Tibial artery (tissue), 4 donors: ENCODE measurements at regions of chr15 and their contacts with region 1.

Region 1: DNA sequence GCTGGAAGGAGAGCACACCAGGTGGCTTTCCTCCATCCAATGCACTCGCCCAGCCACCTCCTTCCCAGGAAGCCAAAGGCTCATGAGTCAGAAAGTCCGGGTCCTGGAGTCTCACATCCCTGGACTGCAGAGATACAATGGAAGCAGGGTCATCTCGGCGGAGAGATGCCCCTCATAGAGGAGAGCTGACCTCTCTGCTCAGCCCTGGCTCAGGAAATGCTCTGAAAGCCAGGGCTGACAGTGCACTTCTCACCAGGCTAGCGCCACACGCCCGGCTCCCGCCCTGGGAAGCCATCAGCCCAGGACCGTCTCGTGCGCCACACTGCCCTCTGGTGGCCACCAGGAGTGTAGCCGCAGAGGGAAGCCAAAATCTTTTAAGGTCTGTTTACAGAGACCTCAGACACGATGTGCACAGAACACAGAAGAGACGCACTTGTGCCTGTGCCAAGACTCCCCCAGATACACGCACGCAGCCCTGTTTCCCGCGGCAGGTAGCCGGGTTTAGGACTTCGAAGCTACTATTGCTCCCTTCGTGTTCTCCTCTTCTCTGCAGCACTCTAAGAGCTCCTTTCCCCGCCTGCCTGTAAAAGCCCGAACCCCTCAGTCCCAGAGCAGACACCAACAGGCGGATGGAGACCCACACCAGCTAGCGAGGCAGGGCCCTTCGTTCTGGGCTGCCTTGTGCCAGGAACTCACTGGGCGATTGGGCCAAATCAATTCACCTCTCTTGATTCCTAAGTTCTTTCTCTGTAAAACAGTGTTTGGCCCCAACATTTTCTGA is 9.7 kb downstream of the NTRK3 start:
- DNase-seq: peak; percentile 67 to 88
- H3K4me3 ChIP-seq: peak overlapping the region; percentile 32
- H3K27ac ChIP-seq: peak overlapping the region; percentile 78 to 93
- H3K4me1 ChIP-seq: peaks cover 0 to 93% (median 47%) of the 10 kb centered on the region in 4 donors
- H3K27me3 ChIP-seq: no peaks in the 10 kb centered on the region
- CTCF ChIP-seq: peak; percentile 94 to 98

Region 2: GRCh38 chr15:87902772-87903426 is 344.0 kb before region 1 on chr15:
- intact Hi-C with region 1: loop called (anchors 5 kb)
- DNase-seq: peak; percentile 65 to 90
- H3K4me3 ChIP-seq: peak overlapping the region in 1 of 2 donors; percentile 29
- H3K27ac ChIP-seq: peak overlapping the region; percentile 81 to 83
- H3K4me1 ChIP-seq: peaks cover 0 to 43% (median 3%) of the 10 kb centered on the region in 4 donors
- H3K27me3 ChIP-seq: no peaks in the 10 kb centered on the region
- CTCF ChIP-seq: peak; percentile 20 to 37

Region 3: DNA sequence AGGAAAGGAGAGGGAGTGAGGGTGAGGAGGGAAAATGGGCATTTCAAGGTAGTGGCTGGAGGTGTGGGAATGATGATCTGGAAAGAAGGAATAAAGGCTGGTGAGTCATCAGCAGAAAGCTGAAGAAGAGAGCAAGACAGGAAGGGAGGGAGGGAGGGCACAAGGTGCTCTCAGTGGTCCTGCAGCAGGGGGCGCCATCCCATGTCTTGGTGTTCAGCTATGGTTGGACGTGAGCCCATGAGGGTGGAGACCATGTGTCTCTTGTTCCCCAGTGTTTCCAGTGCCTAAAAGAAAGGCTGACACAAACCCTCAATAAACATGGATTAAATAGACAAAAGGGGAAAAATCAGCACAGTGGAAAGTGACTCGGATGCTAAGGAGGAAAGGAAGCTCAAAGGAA is 218.8 kb before region 1 on chr15:
- intact Hi-C with region 1: no loop called
- DNase-seq: no peak
- H3K4me3 ChIP-seq: no peak overlapping the region
- H3K27ac ChIP-seq: no peak overlapping the region
- H3K4me1 ChIP-seq: no peaks in the 10 kb centered on the region
- H3K27me3 ChIP-seq: no peaks in the 10 kb centered on the region
- CTCF ChIP-seq: no peak

Region 4: GRCh38 chr15:88077296-88078020 is 169.4 kb before region 1 on chr15:
- intact Hi-C with region 1: loop called (anchors 5 kb)
- DNase-seq: peak in 1 of 2 donors; percentile 78
- H3K4me3 ChIP-seq: no peak overlapping the region
- H3K27ac ChIP-seq: peak overlapping the region; percentile 76 to 77
- H3K4me1 ChIP-seq: peaks cover 0 to 60% (median 29%) of the 10 kb centered on the region in 4 donors
- H3K27me3 ChIP-seq: no peaks in the 10 kb centered on the region
- CTCF ChIP-seq: no peak

Region 5: DNA sequence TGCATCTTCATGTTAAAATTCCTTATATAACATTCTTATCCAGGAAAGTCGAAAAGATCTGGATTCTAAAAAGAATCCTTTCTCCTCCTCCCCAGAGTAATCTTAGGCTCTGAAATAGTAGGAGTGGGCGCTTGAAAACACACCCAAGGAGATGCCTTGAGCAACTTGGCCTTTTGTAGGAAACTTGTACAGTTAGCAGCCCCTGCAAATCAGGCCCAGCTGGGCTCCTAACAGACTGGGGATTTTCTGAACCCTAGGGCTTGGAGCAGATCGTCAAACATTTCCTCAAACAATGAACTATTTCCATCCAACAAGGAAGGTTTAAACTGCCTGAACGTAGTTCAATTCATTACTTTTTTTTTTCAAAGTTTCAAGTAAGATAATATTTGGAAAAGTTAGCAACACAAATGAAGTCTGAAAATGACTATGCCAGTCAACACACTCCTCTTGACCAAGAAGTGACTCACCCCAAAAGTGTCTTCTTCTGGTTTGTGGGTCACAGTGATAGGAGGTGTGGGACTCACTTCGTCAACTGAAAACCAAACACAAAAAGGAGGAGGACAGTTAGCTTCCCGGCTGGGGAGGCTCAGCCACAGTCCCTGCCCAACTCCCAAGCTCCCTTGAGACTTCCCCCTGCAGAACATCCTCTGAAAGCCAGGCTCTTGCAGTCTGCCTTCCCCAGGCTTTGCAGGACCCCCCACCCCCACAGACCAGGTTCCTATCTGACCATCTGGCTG is 120.0 kb before region 1 on chr15:
- intact Hi-C with region 1: loop called (anchors 10 kb)
- DNase-seq: no peak
- H3K4me3 ChIP-seq: no peak overlapping the region
- H3K27ac ChIP-seq: peak overlapping the region; percentile 70 to 78
- H3K4me1 ChIP-seq: peaks cover 0 to 44% (median 25%) of the 10 kb centered on the region in 4 donors
- H3K27me3 ChIP-seq: no peaks in the 10 kb centered on the region
- CTCF ChIP-seq: no peak

Region 6: GRCh38 chr15:88913017-88913849 is 666.4 kb after region 1 on chr15 and contains the start of gene MFGE8:
- intact Hi-C with region 1: loop called (anchors 10 kb)
- DNase-seq: peak; percentile 83 to 92
- H3K4me3 ChIP-seq: peak within 1 kb of the TSS; percentile 80
- H3K27ac ChIP-seq: peak within 1 kb of the TSS; percentile 87 to 95
- H3K4me1 ChIP-seq: peaks cover 0 to 68% (median 37%) of the 10 kb centered on the region in 4 donors
- H3K27me3 ChIP-seq: no peaks in the 10 kb centered on the region
- CTCF ChIP-seq: no peak

Region 7: DNA sequence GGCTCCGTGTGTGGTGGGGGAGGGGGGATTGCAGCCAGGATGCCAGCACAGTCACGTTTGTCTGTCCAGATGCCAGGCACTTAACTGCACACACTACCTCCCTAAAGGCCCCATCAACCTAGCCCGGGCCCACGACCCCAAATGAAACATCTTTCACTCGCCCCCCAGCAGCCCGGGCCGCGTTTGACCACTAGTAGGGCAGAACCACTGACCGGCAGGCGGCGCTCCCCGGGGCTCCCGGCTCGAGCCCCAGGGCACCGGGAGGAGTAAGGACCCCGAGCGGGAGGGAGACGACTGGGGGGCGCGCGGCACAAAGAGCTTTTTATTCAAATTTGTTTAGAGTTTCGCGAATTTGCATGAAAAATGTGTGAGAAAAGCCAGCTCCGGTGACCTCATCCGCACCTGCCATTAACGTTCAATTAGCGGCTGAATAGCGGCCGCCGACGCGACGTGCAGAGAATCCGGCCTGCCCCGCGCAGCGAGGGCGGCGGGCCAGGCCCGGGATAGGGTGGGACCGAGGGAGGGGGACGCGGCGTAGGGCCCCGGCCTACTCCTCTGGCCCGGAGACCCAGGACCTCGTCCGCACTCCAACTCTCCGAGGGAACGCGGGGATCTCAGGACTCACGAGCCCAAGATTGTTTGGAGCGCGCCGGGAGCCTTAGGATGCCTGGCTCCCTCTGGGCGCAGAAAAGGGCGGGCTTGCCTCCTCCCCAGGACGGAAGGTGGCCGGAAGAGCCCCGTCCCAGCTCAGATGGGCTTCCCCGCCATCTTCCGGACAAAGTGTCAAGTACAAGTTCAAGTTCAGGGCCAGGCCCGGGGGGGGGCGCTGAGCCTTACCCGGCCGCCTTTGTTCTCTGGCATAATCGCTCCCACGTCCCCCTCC is 1152.6 kb after region 1 on chr15:
- intact Hi-C with region 1: no loop called
- DNase-seq: no peak
- H3K4me3 ChIP-seq: peak overlapping the region; percentile 12 to 31
- H3K27ac ChIP-seq: no peak overlapping the region
- H3K4me1 ChIP-seq: peaks cover 0 to 25% (median 20%) of the 10 kb centered on the region in 4 donors
- H3K27me3 ChIP-seq: peaks cover 8 to 100% of the 10 kb centered on the region in 2 donors
- CTCF ChIP-seq: no peak